OCI-LY7 (cell line): ENCODE measurements at regions of chr15 and their contacts with region 1.

Region 1: GRCh38 chr15:99275525-99276128 is 24.3 kb downstream of the LRRC28 start:
- DNase-seq: no peak
- H3K4me3 ChIP-seq: no peak overlapping the region
- H3K27ac ChIP-seq: no peak overlapping the region
- H3K4me1 ChIP-seq: no peaks in the 10 kb centered on the region
- CTCF ChIP-seq: no peak

Region 2: GRCh38 chr15:98927022-98927421 is 348.6 kb before region 1 on chr15:
- CTCF ChIA-PET with region 1: no interaction called
- POLR2A ChIA-PET with region 1: no interaction called
- intact Hi-C with region 1: no loop called
- DNase-seq: no peak
- H3K4me3 ChIP-seq: no peak overlapping the region
- H3K27ac ChIP-seq: no peak overlapping the region
- H3K4me1 ChIP-seq: no peaks in the 10 kb centered on the region
- CTCF ChIP-seq: no peak

Region 3: DNA sequence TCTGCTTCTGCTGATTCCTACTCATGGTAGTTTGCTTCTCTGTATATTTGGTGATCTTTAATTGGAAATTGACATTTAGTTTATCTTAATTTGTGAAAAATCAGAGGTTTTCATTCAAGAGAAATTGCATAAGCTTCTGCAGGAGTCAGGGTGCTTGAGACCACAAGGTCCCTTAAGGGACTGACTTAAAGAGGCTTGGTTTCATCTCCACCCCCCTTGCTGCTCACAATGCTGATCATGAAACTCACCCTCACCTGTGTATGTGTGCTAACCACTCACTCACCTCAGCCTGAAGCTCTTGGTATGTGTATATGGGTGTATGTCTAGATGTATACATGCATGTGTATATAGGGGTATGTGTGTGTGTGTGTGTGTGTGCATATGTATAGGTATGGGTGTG is 279.5 kb before region 1 on chr15:
- CTCF ChIA-PET with region 1: no interaction called
- POLR2A ChIA-PET with region 1: no interaction called
- intact Hi-C with region 1: no loop called
- DNase-seq: no peak
- H3K4me3 ChIP-seq: no peak overlapping the region
- H3K27ac ChIP-seq: no peak overlapping the region
- H3K4me1 ChIP-seq: no peaks in the 10 kb centered on the region
- CTCF ChIP-seq: no peak

Region 4: DNA sequence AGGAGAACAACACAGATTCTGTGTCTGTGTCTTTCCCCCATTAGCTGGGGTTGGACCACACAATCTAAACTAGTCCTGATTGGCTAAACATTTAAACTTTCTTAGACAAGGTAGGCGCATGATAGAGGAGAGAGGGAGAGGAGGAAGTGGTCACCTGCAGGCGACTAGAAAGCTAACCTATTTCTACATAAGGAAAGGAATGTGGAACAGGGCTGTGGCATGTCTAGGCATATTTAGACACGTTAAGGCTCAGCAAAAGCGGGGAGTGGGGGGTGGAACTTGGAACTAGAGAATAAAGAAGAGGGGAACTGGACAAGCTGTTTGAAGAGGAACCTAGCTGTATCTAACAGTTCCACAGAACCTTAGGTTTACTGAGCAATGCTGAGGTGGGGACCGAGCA is 11.5 kb before region 1 on chr15:
- CTCF ChIA-PET with region 1: no interaction called
- POLR2A ChIA-PET with region 1: interaction called, 12 read pairs
- intact Hi-C with region 1: no loop called
- DNase-seq: no peak
- H3K4me3 ChIP-seq: no peak overlapping the region
- H3K27ac ChIP-seq: no peak overlapping the region
- H3K4me1 ChIP-seq: no peaks in the 10 kb centered on the region
- CTCF ChIP-seq: no peak

Region 5: DNA sequence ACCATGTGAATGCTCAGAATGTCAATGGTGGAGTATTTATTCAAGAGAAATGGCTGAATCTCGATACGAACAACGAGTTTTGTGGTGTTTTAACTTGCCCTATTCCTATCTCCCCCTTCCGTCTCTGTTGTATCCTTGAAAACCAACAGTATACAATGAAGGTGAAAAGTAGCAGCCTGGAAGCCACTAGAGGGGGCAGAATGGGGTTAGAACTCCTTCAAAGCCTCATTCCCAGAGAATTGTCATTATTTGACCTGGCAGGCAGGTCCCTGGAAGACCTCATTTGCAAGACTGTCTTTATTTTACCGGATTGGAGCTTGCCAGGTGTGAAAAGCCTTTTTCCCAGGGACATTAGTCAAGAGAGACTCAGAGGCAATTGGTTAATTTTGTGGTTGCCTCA is 115.0 kb after region 1 on chr15:
- CTCF ChIA-PET with region 1: no interaction called
- POLR2A ChIA-PET with region 1: no interaction called
- intact Hi-C with region 1: no loop called
- DNase-seq: no peak
- H3K4me3 ChIP-seq: no peak overlapping the region
- H3K27ac ChIP-seq: no peak overlapping the region
- H3K4me1 ChIP-seq: no peaks in the 10 kb centered on the region
- CTCF ChIP-seq: 0 out of 2 replicates have a peak, but pooled peaks have one; percentile 19

Region 6: DNA sequence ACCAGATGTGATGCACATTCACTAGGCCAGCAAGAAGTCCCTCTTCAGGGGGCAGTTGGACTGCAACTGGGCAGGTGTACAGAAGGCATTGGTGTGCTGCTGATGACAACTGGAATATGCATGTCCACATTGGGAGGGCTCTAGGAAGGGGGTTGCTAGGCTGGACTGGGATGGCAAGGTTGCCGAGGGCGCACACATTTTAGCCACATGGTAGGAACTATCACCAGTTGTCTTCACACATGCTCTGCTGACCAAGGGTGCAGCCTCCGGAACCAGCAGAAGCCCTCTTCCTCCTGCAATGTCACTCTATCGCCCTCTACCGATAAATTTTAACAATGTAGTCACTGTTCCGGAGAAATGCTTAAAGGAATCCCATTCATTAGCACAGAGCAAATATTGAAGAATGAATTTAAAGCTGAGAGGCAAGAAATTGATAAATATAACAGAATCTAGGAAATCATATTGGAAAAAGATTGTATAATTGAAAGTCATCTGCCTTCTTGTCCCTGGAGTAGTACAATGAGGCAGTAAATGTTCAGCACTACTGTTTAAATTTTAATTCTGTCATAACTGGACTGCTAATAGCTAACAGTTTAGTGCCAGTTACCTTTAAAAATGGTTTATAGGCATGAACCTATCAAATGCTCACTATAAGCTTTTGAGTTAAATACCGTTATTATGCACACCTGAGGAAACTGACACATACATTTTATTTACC is 480.2 kb after region 1 on chr15:
- CTCF ChIA-PET with region 1: no interaction called
- POLR2A ChIA-PET with region 1: no interaction called
- intact Hi-C with region 1: loop called (anchors 5 kb)
- DNase-seq: peak; percentile 66
- H3K4me3 ChIP-seq: no peak overlapping the region
- H3K27ac ChIP-seq: no peak overlapping the region
- H3K4me1 ChIP-seq: no peaks in the 10 kb centered on the region
- CTCF ChIP-seq: peak; percentile 92